Cardiac septum (tissue), 1 donor: ENCODE measurements at regions of chr10 and their contacts with region 1.

Region 1: GRCh38 chr10:4234661-4235060 is 449.7 kb upstream of the KLF6 start:
- DNase-seq: no peak

Region 2: DNA sequence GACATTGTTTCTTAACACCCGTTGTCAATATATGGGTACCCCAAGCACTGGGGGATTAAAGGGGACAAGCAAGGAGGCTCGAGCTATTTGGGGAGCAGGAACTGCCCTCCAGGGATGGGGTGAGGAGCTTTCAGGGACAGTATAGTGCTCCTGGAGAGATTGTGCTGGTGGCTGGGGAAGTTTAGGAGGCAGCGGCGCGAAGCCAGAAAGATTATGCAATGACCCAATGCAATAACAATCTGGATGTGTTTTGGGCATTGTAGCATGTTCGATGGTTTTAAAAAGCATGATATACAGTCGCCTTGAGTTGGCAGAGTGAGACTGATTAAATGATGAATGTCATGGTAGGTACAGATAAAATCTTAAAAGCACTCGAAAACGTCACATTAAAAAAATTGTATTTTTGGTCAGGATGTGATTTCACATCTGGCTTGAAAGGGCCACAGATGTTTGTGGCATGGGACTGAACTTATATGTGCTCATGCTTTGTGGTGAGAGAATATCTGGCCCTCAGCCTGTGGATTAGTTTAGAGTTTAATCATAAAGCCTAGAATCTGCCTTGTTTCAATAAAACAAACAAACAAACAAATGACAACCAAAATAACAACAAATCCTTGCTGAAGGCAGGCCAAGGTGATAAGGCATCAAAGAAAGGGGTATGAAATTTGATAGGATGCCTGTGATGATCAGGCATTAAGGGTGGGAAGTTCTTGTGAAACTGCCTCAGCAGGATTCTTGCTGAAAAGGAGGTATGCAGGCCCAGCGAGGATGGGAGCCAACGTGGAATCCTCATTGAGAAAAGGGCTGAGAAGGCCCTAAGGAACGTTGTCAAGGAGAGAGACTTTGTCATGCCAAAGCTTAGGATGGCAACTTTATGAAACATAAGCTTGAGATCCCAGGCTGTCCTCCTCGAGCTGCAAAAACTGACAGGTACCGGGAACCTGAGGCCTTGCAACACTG is 32.5 kb before region 1 on chr10:
- intact Hi-C with region 1: loop called (anchors 5 kb)
- DNase-seq: no peak